CD4-positive, alpha-beta T cell (primary cell): ENCODE measurements at regions of chr2 and their contacts with region 1.

Region 1: GRCh38 chr2:199556527-199557289 is 99.0 kb upstream of the SATB2 start:
- DNase-seq: no peak
- ATAC-seq: no peak
- H3K4me3 ChIP-seq: no peak overlapping the region
- H3K4me3 Mint-ChIP-seq: no peak overlapping the region
- H3K27ac ChIP-seq: no peak overlapping the region
- H3K27ac Mint-ChIP-seq: no peak overlapping the region
- H3K4me1 ChIP-seq: no peaks in the 10 kb centered on the region
- H3K4me1 Mint-ChIP-seq: no peaks in the 10 kb centered on the region
- H3K27me3 ChIP-seq: peaks cover 0 to 2% of the 10 kb centered on the region in 2 experiments
- H3K27me3 Mint-ChIP-seq: peaks cover 8% of the 10 kb centered on the region
- CTCF ChIP-seq: no peak

Region 2: DNA sequence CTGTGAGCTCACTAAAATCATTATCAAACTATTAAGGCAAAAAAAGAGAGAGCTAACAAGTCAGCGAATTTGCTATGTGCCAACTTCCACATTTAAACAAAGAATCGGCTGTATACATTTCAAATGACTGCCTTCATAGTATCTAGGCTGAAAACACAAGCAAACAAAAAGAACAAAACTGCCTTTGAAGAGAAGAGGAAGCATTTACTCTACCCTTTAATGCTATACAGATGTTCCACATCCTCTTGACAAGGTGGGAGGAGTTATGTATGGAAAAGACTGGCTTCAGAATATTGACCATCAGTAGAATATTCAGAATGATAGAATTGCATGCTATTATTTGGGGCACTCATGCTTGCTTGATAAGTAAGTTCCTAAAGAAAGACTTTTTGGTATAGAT is 1010.6 kb before region 1 on chr2:
- CTCF ChIA-PET with region 1: no interaction called
- POLR2A ChIA-PET with region 1: no interaction called
- intact Hi-C with region 1: loop called in 1 of 2 experiments (anchors 10 kb)
- DNase-seq: no peak
- ATAC-seq: no peak
- H3K4me3 ChIP-seq: no peak overlapping the region
- H3K4me3 Mint-ChIP-seq: no peak overlapping the region
- H3K27ac ChIP-seq: no peak overlapping the region
- H3K27ac Mint-ChIP-seq: no peak overlapping the region
- H3K4me1 ChIP-seq: no peaks in the 10 kb centered on the region
- H3K4me1 Mint-ChIP-seq: no peaks in the 10 kb centered on the region
- H3K27me3 ChIP-seq: no peaks in the 10 kb centered on the region
- H3K27me3 Mint-ChIP-seq: no peaks in the 10 kb centered on the region
- CTCF ChIP-seq: no peak